ENCODE measurements at regions of chr19 and their contacts with region 1.

Region 1: DNA sequence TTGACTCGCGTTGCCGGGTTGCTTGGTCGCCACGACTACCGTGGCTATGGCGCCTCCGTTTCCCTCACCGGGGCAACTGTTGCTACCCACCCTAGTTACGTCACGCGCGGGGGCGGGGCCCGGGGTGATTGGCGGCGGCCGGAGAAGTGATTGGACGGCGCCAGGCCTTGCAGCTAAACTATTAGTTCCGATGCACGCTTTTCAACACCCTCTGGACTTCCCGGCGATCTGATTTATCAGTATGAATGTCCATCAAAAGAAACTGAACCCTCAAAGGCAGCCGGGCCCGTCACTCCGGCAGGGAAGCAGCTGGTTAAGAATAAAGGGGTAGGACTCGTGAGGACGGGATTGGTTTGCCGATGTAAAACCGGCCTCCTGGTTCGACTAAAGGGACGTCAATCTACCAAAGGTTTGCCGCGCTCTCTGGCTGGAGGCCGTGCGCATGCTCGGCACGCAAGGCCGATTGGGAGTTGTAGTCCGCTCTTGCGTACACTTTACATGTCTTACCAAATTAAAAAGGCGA is at the start of gene RFX1:
- DNase-seq: peak; percentile 100
- ATAC-seq: peak; percentile 83
- H3K4me3 Mint-ChIP-seq: peak within 1 kb of the TSS; percentile 94
- H3K27ac Mint-ChIP-seq: peak within 1 kb of the TSS; percentile 96
- H3K4me1 Mint-ChIP-seq: peaks cover 33% of the 10 kb centered on the region
- H3K27me3 Mint-ChIP-seq: no peaks in the 10 kb centered on the region
- total RNA-seq, gene RFX1: 17.7 to 22.2 TPM

Region 2: GRCh38 chr19:13899393-13899792 is 106.9 kb before region 1 on chr19:
- POLR2A ChIA-PET with region 1: no interaction called
- DNase-seq: no peak
- ATAC-seq: no peak
- H3K4me3 Mint-ChIP-seq: no peak overlapping the region
- H3K27ac Mint-ChIP-seq: no peak overlapping the region
- H3K4me1 Mint-ChIP-seq: peaks cover 12% of the 10 kb centered on the region
- H3K27me3 Mint-ChIP-seq: no peaks in the 10 kb centered on the region

Region 3: GRCh38 chr19:13952154-13953035 is 53.9 kb before region 1 on chr19 and contains the start of gene DCAF15:
- POLR2A ChIA-PET with region 1: interaction called, 23 read pairs
- DNase-seq: peak; percentile 95
- ATAC-seq: peak; percentile 99
- H3K4me3 Mint-ChIP-seq: peak within 1 kb of the TSS; percentile 99
- H3K27ac Mint-ChIP-seq: peak within 1 kb of the TSS; percentile 93
- H3K4me1 Mint-ChIP-seq: peaks cover 14% of the 10 kb centered on the region
- H3K27me3 Mint-ChIP-seq: no peaks in the 10 kb centered on the region
- total RNA-seq, gene DCAF15: 105 to 106 TPM

Region 4: DNA sequence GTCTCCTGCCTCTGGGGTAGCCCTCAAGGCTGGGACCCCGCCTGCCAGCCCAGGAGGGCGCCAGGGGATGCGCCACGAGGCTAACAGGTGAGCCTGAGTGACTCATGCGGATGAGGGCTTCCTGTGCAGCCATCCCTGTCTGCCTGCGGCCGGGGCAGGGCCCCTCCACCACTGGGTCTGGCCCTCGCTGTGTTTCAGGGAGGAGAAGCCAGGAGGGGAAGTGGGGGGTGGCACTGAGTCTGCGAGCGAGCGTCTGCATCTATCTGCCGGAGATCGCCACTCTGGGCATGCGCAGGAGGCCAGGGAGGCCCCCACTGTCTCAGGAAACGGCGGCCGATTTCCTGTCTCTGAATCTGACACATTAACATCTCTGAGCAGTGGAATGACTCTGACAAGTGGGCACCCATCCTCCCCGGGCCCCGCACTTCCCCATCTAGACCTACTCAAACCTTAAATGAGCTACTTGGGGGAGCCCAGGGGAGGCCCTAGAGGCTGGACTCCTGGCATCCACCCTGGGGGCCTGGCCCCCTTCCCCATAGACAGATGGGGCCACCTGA is 19.9 kb before region 1 on chr19:
- POLR2A ChIA-PET with region 1: interaction called, 262 read pairs
- DNase-seq: peak; percentile 98
- ATAC-seq: peak; percentile 93
- H3K4me3 Mint-ChIP-seq: peak overlapping the region; percentile 69
- H3K27ac Mint-ChIP-seq: peak overlapping the region; percentile 98
- H3K4me1 Mint-ChIP-seq: peaks cover 60% of the 10 kb centered on the region
- H3K27me3 Mint-ChIP-seq: no peaks in the 10 kb centered on the region

Region 5: DNA sequence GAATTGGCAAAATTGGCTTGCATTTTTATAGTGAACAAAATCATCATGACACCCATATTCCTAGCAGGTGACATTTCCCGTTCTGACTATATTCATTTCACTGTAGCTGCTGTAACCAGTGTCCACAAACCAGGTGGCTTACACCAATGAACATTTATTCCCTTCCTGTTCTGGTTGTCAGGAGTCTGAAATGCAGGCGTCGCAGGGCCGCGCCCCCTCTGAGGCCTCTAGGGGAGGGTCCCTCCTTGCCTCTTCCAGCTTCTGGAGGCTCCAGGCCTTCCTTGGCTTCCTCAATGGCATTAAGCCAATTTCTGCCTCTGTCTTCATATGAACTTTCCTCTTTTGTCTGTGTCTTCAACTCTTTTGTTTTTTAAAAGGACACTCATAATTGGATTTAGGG is 15.2 kb after region 1 on chr19:
- POLR2A ChIA-PET with region 1: interaction called, 14 read pairs
- DNase-seq: no peak
- ATAC-seq: no peak
- H3K4me3 Mint-ChIP-seq: no peak overlapping the region
- H3K27ac Mint-ChIP-seq: no peak overlapping the region
- H3K4me1 Mint-ChIP-seq: peaks cover 6% of the 10 kb centered on the region
- H3K27me3 Mint-ChIP-seq: no peaks in the 10 kb centered on the region

Region 6: GRCh38 chr19:14064786-14065185 is 58.5 kb after region 1 on chr19:
- POLR2A ChIA-PET with region 1: no interaction called
- DNase-seq: no peak
- ATAC-seq: no peak
- H3K4me3 Mint-ChIP-seq: no peak overlapping the region
- H3K27ac Mint-ChIP-seq: no peak overlapping the region
- H3K4me1 Mint-ChIP-seq: peaks cover 4% of the 10 kb centered on the region
- H3K27me3 Mint-ChIP-seq: peaks cover 20% of the 10 kb centered on the region

Measured in activated naive CD8-positive, alpha-beta T cell treated with anti-CD3 and anti-CD28 coated beads, Interleukin-2, amount 10 ng/mL, durations not matched to agents 7 days and 5 days (primary cell).